Activated T-helper 2 cell treated with anti-CD3 and anti-CD28 coated beads, Interferon-gamma antibody, Interleukin-2, Interleukin-4, amounts not matched to agents 10 μg/mL and 5 μg/mL and 100 μg/mL, durations not matched to agents 14 hours and 24 hours and 36 hours (primary cell): ENCODE measurements at regions of chr5 and their contacts with region 1.

Region 1: GRCh38 chr5:96934708-96935558 is 947 bp upstream of the LNPEP start:
- DNase-seq: peak; percentile 96
- H3K4me3 Mint-ChIP-seq: peak overlapping the region; percentile 88
- H3K27ac Mint-ChIP-seq: peak overlapping the region; percentile 99
- H3K4me1 Mint-ChIP-seq: peaks cover 58% of the 10 kb centered on the region
- H3K27me3 Mint-ChIP-seq: no peaks in the 10 kb centered on the region

Region 2: DNA sequence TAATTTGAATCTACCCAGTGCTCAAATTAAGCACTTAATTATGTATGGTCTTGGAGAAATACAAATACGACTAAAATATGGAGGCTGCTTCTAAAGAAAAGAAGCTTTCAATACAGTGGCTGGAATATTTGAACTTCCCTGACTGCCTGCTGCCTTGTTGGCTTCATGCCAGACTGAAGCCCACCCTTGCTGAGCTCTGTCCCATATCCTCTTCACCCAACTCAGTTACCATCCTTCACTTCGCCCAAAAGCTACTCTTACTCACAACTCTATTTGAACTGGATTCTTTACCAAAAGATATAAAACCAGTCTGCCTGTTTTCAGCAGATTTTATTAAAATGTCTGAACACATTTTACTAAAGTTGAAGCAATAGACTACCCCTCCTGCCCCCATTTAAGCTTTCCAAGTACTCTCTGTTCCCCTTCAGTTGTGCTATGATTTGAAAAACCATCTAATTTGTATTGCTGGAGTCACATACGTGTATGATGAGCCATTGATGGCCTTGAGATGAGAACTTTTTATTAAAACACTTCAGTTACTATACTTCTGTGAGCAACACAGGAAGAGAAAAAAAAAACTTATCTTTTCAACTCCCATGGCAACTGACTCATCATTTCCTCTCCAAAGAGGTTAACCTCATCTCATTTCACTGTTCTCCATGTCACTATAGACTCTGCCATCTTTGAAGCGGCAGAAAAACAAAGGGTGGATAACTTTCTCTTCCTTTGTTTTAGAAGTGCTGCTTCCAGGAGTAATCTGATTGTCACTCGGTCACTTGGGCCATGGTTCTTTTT is 397.7 kb before region 1 on chr5:
- intact Hi-C with region 1: loop called (anchors 5 kb)
- DNase-seq: peak; percentile 17
- H3K4me3 Mint-ChIP-seq: no peak overlapping the region
- H3K27ac Mint-ChIP-seq: peak overlapping the region; percentile 73
- H3K4me1 Mint-ChIP-seq: peaks cover 30% of the 10 kb centered on the region
- H3K27me3 Mint-ChIP-seq: peaks cover 12% of the 10 kb centered on the region

Region 3: DNA sequence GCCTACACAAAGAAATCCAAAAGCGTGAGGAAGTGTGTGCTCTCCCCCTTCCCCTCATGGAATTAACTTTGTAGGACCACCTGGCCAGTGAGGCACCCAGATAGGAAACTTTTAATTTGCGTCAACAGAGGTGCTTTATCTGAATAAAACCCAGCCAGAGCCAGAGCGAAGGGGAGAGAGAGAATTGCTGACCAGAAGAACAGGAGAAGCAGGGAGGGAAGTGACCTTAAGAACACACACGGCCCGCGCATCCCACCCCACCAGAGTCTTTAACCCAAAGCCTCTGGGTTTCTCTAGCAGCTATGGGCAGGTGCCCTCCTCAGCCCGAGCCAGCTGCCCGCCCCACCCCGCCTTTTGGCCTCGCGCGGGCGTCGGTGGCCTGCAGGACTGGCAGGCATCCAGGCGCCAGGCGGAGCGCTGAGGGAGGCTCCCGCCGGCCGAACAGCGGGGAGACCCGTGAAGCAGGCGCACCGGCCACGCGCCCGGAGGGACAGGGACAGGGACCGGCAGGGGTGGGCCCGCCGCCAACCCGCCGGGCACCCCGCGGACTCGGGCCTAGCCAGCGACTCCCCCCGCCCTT is 127.8 kb before region 1 on chr5:
- intact Hi-C with region 1: loop called (anchors 2 kb)
- DNase-seq: no peak
- H3K4me3 Mint-ChIP-seq: peak overlapping the region; percentile 93
- H3K27ac Mint-ChIP-seq: peak overlapping the region; percentile 92
- H3K4me1 Mint-ChIP-seq: peaks cover 62% of the 10 kb centered on the region
- H3K27me3 Mint-ChIP-seq: no peaks in the 10 kb centered on the region

Region 4: GRCh38 chr5:96919754-96920197 is 15.2 kb before region 1 on chr5:
- intact Hi-C with region 1: loop called (anchors 1 kb)
- DNase-seq: no peak
- H3K4me3 Mint-ChIP-seq: no peak overlapping the region
- H3K27ac Mint-ChIP-seq: no peak overlapping the region
- H3K4me1 Mint-ChIP-seq: peaks cover 35% of the 10 kb centered on the region
- H3K27me3 Mint-ChIP-seq: no peaks in the 10 kb centered on the region

Region 5: DNA sequence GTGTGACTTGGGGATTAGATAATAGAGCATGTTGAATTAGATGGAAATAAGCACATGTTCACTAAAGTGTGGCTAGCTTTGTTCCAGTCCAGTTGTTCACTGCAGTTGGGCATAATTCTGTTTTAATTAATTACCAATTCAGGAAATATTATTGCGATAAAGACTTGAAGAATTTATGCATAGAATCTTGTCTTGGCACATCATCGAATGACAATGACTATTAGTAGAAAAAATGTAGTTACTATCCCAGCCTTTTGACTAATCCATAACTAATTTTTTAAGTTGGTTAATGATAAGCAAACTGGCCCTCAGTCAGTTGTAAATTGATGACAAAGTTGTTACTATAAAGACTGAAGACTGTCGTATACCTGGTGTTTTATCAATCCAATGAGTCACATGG is 11.4 kb after region 1 on chr5:
- intact Hi-C with region 1: no loop called
- DNase-seq: no peak
- H3K4me3 Mint-ChIP-seq: no peak overlapping the region
- H3K27ac Mint-ChIP-seq: no peak overlapping the region
- H3K4me1 Mint-ChIP-seq: peaks cover 32% of the 10 kb centered on the region
- H3K27me3 Mint-ChIP-seq: no peaks in the 10 kb centered on the region

Region 6: DNA sequence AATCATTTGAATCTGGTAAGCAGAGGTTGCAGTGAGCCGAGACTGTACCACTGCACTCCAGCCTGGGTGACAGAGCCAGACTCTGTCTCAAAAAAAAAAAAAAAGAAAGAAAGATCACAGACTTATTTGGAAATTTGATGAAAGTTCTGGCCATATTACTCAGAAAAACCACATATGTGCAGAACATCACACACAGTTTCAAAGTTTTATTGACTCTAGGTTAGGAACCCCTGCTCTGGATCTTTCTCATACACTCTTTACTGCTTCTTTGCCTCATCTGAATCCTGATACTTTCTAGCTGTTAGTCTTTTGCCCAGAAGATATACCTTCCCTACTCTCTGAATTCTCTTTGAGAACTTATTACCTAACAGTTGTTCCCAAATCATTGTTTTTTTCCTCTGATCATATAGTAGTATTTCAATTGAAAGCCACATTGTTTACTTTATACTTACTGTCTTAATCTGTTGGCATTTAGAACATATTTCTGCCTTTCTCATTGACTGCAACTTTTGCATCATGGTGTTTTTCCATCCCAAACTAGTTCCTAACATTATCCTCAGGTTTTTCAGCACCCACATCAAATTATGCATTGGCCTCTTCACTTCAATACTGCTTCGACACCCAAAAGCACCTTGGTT is 69.6 kb after region 1 on chr5:
- intact Hi-C with region 1: loop called (anchors 2 kb)
- DNase-seq: no peak
- H3K4me3 Mint-ChIP-seq: peak overlapping the region; percentile 18
- H3K27ac Mint-ChIP-seq: peak overlapping the region; percentile 73
- H3K4me1 Mint-ChIP-seq: peaks cover 29% of the 10 kb centered on the region
- H3K27me3 Mint-ChIP-seq: no peaks in the 10 kb centered on the region

Region 7: GRCh38 chr5:97162045-97162444 is 227.1 kb after region 1 on chr5:
- intact Hi-C with region 1: loop called (anchors 2 kb)
- DNase-seq: peak; percentile 28
- H3K4me3 Mint-ChIP-seq: no peak overlapping the region
- H3K27ac Mint-ChIP-seq: no peak overlapping the region
- H3K4me1 Mint-ChIP-seq: peaks cover 16% of the 10 kb centered on the region
- H3K27me3 Mint-ChIP-seq: no peaks in the 10 kb centered on the region